Posterior vena cava (tissue), 2 donors: ENCODE measurements at regions of chr4 and their contacts with region 1.

Region 1: GRCh38 chr4:27138201-27138600 is 277.6 kb downstream of the STIM2 start:
- DNase-seq: no peak

Region 2: DNA sequence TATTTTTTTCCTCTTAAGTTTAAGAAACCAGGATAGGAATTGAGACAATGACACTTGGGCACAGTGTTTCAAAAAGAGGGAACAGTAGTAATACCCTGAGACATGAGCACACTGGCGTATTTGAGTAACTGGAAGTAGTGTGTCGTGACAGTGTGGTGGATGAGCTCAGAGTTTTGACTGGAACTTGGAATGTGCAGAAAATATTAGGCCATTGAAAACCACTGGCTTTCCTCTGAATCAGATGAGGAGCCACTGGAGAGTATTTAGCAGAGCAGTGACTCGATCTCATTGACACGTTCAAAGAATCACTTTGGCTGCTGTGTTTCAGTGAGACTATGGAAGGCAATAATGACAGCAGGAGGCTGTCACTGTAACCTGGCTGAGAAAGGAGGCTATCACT is 1253.7 kb after region 1 on chr4:
- intact Hi-C with region 1: loop called in 1 of 2 experiments (anchors 5 kb)
- DNase-seq: no peak